CD4-positive, alpha-beta T cell (primary cell): ENCODE measurements at regions of chr20 and their contacts with region 1.

Region 1: GRCh38 chr20:50569864-50570836 is 60.0 kb downstream of the PTPN1 start:
- DNase-seq: peak in 8 of 14 experiments; percentile 20 to 71 (median 38)
- ATAC-seq: peak; percentile 79
- H3K4me3 ChIP-seq: no peak overlapping the region
- H3K4me3 Mint-ChIP-seq: peak overlapping the region; percentile 8
- H3K27ac ChIP-seq: peak overlapping the region in 1 of 2 donors; percentile 0
- H3K27ac Mint-ChIP-seq: peak overlapping the region; percentile 43
- H3K4me1 ChIP-seq: peaks cover 25% of the 10 kb centered on the region
- H3K4me1 Mint-ChIP-seq: peaks cover 78% of the 10 kb centered on the region
- H3K27me3 ChIP-seq: no peaks in the 10 kb centered on the region
- H3K27me3 Mint-ChIP-seq: no peaks in the 10 kb centered on the region
- CTCF ChIP-seq: peak; percentile 46

Region 2: GRCh38 chr20:50478162-50479036 is 91.8 kb before region 1 on chr20:
- CTCF ChIA-PET with region 1: interaction called, 6 read pairs
- POLR2A ChIA-PET with region 1: no interaction called
- intact Hi-C with region 1: loop called in 1 of 2 experiments (anchors 2 kb)
- DNase-seq: peak; percentile 61 to 88 (median 70)
- ATAC-seq: peak; percentile 100
- H3K4me3 ChIP-seq: no peak overlapping the region
- H3K4me3 Mint-ChIP-seq: no peak overlapping the region
- H3K27ac ChIP-seq: no peak overlapping the region
- H3K27ac Mint-ChIP-seq: no peak overlapping the region
- H3K4me1 ChIP-seq: peaks cover 18% of the 10 kb centered on the region
- H3K4me1 Mint-ChIP-seq: peaks cover 21% of the 10 kb centered on the region
- H3K27me3 ChIP-seq: no peaks in the 10 kb centered on the region
- H3K27me3 Mint-ChIP-seq: no peaks in the 10 kb centered on the region
- CTCF ChIP-seq: peak; percentile 82